ENCODE measurements at regions of chr1 and their contacts with region 1.

Region 1: DNA sequence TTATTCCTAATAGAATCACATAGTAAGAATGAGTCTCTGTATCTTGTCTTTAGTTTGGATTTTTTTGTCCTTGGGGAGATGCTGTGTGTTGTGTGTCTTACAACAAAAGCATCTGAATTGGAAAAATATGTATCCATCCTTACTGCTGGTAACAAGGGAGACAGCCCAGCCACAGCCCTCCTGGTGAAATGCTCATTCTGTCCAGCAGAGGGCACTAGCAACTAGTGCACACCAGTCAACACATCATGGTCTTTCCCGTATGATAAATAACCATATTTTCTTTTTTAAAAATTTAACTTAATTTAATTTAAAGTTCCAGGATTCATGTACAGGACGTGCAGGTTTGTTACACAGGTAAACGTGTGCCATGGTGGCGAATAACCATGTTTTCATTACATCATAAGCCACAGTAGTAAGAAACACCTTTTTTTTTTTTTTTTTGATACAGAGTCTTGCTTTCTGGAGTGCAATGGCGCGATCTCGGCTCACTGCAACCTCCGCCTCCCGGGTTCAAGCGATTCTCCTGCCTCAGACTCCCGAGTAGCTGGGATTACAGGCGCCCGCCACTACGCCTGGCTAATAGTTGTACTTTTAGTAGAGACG is 245.1 kb downstream of the PTBP2 start:
- DNase-seq: peak; percentile 49 to 77 (median 71)
- ATAC-seq: peak; percentile 69
- H3K4me3 ChIP-seq: no peak overlapping the region
- H3K4me3 Mint-ChIP-seq: no peak overlapping the region
- H3K27ac ChIP-seq: no peak overlapping the region
- H3K27ac Mint-ChIP-seq: no peak overlapping the region
- H3K4me1 ChIP-seq: no peaks in the 10 kb centered on the region
- H3K4me1 Mint-ChIP-seq: no peaks in the 10 kb centered on the region
- H3K27me3 ChIP-seq: peaks cover 0 to 4% of the 10 kb centered on the region in 2 experiments
- H3K27me3 Mint-ChIP-seq: peaks cover 20% of the 10 kb centered on the region
- CTCF ChIP-seq: peak; percentile 80

Region 2: DNA sequence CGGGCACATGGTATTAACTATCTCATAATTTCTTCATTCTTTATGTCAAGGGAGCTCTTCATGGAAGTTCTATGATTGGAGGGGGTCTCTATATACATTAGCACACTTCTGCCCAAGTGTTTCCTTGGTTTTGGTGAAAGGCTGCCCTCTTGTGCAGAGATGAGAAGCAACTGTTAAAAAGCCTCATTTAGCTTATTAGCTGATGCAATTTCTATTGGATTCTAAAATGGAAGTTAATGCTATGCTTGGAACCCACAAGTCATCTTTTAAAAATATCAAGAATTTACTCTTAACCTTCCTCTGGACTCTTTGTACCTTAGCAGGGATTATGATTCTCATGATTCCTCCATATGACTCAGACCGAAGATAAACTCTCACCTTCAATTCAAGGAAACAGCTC is 83.9 kb after region 1 on chr1:
- CTCF ChIA-PET with region 1: no interaction called
- POLR2A ChIA-PET with region 1: no interaction called
- intact Hi-C with region 1: no loop called
- DNase-seq: no peak
- ATAC-seq: no peak
- H3K4me3 ChIP-seq: no peak overlapping the region
- H3K4me3 Mint-ChIP-seq: no peak overlapping the region
- H3K27ac ChIP-seq: no peak overlapping the region
- H3K27ac Mint-ChIP-seq: no peak overlapping the region
- H3K4me1 ChIP-seq: no peaks in the 10 kb centered on the region
- H3K4me1 Mint-ChIP-seq: no peaks in the 10 kb centered on the region
- H3K27me3 ChIP-seq: no peaks in the 10 kb centered on the region
- H3K27me3 Mint-ChIP-seq: peaks cover 5% of the 10 kb centered on the region
- CTCF ChIP-seq: no peak

Region 3: GRCh38 chr1:97820470-97821188 is 854.0 kb after region 1 on chr1:
- CTCF ChIA-PET with region 1: no interaction called
- POLR2A ChIA-PET with region 1: no interaction called
- intact Hi-C with region 1: loop called in 1 of 2 experiments (anchors 5 kb)
- DNase-seq: peak in 2 of 9 experiments; percentile 11 to 21
- ATAC-seq: no peak
- H3K4me3 ChIP-seq: no peak overlapping the region
- H3K4me3 Mint-ChIP-seq: no peak overlapping the region
- H3K27ac ChIP-seq: no peak overlapping the region
- H3K27ac Mint-ChIP-seq: no peak overlapping the region
- H3K4me1 ChIP-seq: no peaks in the 10 kb centered on the region
- H3K4me1 Mint-ChIP-seq: no peaks in the 10 kb centered on the region
- H3K27me3 ChIP-seq: no peaks in the 10 kb centered on the region
- H3K27me3 Mint-ChIP-seq: no peaks in the 10 kb centered on the region
- CTCF ChIP-seq: peak; percentile 29

Region 4: GRCh38 chr1:98468111-98468717 is 1501.6 kb after region 1 on chr1:
- CTCF ChIA-PET with region 1: interaction called, 5 read pairs
- POLR2A ChIA-PET with region 1: no interaction called
- intact Hi-C with region 1: loop called (anchors 1 to 10 kb)
- DNase-seq: peak in 2 of 9 experiments; percentile 57 to 65
- ATAC-seq: no peak
- H3K4me3 ChIP-seq: no peak overlapping the region
- H3K4me3 Mint-ChIP-seq: no peak overlapping the region
- H3K27ac ChIP-seq: no peak overlapping the region
- H3K27ac Mint-ChIP-seq: no peak overlapping the region
- H3K4me1 ChIP-seq: no peaks in the 10 kb centered on the region
- H3K4me1 Mint-ChIP-seq: no peaks in the 10 kb centered on the region
- H3K27me3 ChIP-seq: no peaks in the 10 kb centered on the region
- H3K27me3 Mint-ChIP-seq: no peaks in the 10 kb centered on the region
- CTCF ChIP-seq: peak; percentile 46

Measured in CD8-positive, alpha-beta T cell (primary cell).